ENCODE measurements at regions of chr7 and their contacts with region 1.

Region 1: DNA sequence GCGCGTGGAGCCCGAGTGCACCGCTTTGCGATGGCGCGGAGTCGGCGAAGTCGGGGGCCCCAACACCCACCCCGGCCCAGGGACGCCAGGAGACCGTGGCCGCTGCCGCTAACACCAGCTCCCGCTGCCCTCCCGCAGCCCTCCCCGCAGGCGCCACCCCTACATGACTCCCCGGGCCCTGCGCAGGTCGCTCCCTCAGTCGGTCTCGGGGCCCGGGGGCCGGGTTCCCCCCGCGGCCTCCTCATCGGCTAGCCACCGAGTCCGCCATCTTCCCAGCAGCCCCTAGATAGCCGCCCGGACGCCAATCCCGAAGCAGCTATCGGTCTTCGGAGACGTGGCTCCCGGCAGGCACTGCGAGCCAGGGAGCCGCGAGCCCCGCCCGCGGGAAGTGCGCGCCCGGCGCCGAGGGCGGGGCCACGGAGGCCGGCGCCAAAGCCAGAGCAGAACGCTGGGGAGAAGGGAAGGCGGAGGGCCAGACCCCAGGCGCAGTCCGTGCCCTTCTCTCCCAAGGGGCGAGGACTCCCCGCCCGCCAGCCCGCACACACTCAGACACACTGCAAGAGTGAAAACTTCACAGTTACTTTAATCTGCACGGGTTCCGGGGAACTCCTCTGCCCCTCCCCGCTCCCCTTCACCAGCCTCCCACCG is at the start of gene FASTK:
- DNase-seq: peak; percentile 97

Region 2: DNA sequence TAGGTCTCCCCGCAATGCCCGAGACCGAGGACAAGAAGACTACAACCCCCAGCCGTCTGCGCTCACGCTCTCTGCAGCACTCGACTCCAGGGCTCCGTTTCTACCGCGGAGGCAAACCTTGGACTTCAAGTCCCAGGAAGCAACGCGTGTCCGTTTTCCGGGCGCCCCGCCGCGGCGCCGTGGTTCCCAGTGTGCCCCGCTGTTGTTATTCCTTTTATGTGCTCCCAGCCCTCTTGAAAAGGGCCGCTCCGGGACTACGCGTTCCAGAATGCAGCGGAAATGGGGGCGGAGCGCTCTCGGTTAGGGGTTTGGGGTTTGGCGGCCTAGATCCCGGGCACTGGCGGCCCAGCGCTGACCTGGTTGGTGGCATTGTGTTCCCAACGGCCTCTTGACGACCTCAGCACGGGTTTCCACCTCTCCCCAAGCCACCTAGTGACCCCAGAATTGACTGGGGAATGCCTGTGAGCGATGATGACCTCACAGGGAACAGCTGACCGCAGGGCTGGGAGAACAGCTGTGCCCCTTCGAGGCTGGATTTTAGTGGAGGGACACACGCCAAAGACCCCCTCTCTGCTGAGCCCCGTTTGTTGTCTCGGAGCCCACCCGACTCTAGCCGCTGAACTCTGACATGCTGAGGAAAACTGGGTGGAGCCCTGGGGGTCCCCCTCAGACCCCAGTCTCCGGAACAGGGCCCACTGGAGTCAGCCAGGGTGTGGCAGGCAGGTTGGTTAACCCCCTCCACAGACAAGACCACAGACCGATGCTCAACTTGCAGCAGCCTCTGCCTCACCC is 22.5 kb before region 1 on chr7:
- CTCF ChIA-PET with region 1: no interaction called
- POLR2A ChIA-PET with region 1: interaction called, 38 read pairs
- DNase-seq: peak; percentile 100

Region 3: GRCh38 chr7:151068068-151068773 is 12.4 kb before region 1 on chr7:
- CTCF ChIA-PET with region 1: interaction called, 6 read pairs
- POLR2A ChIA-PET with region 1: interaction called, 16 read pairs
- DNase-seq: no peak

Measured in HEK293T (cell line).